Posterior cingulate gyrus (tissue), 11 donors: ENCODE measurements at regions of chr14 and their contacts with region 1.

Region 1: DNA sequence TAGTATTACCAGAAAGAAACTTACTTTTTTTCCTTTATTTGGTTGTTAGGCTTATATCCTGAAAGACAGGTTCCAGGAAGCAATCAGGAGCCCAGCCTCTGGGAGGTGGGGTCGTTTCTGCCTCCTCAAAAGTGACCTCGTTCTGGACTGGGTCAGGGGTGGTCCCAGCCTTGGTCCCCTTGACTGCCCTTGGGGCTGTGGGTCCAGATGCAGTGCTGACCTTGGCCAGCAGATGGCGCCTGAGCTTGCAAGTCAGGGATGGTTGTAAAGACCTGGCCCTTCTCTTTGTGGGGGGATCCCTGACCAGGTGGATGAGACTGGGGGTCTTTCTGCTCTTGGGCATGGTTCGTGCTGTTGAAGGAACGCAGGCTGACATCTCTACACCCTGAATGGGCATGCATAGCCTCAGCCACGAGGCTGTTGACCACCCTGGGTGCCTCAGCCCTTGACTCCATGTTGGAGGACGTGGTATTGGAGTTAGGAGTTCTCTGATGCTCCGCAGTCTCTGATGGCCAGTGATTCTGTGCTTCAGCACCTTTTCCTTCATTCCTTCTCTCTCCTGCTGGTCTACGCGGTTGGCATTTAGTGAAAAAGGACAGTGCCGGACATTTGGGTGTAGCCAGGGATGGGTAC is 62.4 kb downstream of the ADCK1 start:
- DNase-seq: peak; percentile 71 to 97 (median 90)

Region 2: DNA sequence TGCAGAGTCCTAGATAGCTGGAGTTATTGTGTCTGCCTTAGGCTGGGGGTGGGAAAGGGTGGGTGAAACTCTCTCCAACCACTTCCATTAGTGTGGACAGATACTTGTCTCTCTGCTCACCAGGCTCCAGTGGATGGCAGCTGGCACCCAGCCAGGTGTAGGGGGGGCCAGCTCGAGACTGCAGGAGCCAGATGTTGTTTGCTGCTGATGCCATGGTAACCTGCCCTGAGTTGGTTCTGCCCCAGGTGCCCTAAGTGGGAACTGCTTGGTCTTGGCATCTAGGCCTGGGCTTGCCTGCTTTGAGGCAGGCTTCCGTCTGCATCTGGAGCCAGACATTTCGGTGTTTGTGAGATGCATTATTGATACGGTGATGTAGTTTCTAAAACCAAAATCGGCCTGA is 19.8 kb after region 1 on chr14:
- intact Hi-C with region 1: no loop called
- DNase-seq: peak in 8 of 10 donors; percentile 29 to 93 (median 58)

Region 3: GRCh38 chr14:77912754-77913556 is 50.7 kb after region 1 on chr14:
- intact Hi-C with region 1: no loop called
- DNase-seq: peak in 2 of 10 donors; percentile 9 to 56

Region 4: DNA sequence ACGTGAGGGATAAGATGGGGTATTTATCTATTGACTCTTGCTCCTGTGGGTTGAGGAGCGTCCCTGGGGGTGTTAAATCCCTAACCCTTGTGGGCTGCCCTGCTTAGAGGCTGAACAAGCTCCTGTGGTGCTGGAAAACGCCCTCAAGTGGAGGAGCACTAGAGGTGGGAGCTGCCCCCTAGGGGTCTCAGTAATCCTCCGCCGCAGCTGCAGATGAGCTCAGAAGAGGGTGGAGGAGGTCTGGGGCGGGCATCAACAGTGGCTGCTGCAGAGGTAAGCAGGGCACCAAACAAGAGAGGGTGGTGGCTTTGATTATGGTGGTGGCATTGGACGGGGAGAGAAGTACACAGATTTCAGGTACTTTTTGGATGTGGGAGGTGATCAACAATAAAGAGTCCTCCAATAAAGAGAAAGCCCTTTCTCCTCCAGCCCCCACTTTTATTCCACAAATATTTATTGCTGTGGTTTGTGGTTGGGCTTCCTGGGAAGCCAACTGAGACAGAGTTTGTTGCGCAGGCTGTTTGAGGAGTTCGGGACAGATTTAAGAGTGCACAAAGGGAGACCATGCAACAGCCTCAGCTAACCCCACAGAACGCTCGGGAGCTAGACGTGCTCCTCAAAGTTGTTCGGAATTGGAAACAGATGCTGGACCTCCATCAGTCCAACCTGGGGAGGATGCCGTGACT is 117.5 kb after region 1 on chr14:
- intact Hi-C with region 1: loop called (anchors 5 kb)
- DNase-seq: peak in 6 of 10 donors; percentile 52 to 94 (median 52)

Region 5: DNA sequence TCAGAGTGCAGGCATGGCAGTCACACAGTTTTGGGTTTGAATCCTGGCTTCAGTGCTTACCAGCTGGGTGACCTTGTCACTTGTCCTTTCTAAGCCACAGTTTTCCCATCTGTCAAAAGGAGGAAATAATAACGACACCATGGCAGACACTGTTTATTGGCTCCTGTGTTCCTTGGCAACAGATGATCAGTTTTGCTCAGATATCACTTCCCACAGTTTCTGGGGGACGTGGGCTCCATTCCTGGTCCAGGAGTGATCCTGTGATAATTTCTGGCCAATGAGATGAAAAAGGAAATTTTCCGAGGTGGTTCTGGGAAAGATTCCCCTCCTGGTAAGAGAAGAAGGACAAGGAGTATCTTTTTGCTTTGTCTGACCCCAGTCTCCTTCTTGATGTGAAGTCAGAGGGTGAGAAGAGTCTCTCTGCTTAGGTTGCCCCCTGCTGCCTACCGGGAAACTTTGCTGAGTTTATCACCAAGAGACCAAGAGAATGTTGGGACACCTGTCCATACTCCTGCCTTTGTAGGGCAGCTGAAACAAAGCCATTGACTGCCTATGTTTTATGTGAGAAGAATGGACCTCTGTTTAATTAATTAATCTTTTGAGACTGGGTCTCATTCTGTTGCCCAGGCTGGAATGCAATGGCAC is 129.0 kb after region 1 on chr14:
- intact Hi-C with region 1: loop called (anchors 5 kb)
- DNase-seq: peak in 2 of 10 donors; percentile 50 to 58

Region 6: DNA sequence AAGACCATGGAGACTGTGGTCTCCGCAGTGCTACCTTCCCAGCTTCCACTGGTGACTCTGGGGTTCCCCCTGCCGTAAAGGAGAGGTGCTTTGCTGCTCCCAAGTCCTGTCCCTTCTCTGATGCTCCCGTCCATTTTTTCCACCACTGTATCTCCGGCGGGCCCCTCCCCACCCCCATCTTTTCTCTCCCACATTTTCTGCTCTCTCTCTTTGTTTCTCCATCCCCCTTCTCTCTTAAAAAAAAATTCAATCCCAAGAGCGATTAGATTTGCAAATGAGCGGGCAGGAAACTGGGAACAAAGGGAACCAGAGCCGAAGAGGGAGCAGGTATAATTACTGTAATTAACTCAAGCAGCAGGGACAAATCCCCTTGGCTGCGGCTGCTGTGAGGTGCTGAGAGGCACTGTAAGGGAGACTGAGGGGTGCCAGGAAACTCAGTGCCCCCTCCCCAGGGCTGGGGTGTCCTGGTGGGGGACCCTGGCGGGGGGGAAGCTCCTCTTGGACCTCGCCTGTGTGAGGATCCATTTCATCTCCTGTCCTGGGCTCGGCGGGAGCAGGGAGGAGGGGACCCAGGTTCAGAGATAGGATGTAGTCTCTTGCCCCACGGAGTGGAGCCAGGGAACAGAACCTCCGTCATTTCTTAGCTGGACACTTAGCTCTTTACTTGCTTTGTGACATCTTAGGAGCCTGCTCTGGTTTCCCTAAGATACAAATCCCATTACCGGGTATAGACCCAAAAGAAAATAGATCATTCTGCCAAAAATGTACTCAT is 167.5 kb after region 1 on chr14:
- intact Hi-C with region 1: loop called (anchors 2 kb)
- DNase-seq: peak in 5 of 10 donors; percentile 15 to 86 (median 33)

Region 7: DNA sequence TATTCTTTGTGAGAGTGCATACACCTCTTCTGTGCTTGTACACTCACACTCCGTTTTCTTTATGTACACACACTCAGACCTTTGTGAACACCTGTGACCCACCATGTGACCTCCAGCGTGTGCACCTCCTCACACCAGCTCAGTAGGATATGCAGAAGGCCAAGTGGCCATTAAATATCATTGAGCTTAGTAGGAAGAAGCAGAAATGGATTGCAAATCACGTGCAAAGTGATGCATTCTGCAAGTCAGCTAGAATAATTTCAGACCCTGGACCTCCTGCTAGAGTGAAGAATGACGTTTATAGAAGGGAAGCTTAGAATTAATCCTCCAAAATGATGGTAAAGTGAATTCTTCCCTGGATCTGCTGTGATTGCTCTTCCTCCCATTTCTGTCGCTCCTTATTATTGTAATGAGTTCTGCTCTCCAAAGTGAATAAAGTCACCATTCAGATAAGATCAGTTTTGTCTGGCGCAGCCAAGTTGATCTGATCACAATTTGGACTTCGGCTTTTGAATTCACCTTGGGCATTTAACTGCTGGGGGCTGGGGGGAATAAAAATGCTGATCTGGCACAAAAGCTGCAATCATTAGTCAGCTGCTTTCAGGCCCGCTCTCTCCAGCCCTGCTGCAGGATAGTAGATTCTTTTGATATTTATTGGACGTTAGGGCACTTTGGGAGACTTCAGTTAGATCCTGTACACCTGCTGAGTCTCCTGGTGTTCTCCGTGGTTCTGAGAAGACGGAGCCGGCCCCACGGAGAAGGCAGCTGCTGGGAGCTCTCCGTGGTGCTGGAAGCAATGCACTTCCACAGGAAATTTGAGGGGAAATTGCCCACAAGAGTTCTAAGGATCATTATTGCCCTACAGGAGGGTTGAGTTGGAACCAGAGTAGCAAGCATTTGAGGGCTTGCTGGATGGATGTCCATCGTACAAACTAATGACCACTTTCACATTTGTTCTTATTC is 295.5 kb after region 1 on chr14:
- intact Hi-C with region 1: loop called (anchors 10 kb)
- DNase-seq: peak in 1 of 10 donors; percentile 29

Region 8: DNA sequence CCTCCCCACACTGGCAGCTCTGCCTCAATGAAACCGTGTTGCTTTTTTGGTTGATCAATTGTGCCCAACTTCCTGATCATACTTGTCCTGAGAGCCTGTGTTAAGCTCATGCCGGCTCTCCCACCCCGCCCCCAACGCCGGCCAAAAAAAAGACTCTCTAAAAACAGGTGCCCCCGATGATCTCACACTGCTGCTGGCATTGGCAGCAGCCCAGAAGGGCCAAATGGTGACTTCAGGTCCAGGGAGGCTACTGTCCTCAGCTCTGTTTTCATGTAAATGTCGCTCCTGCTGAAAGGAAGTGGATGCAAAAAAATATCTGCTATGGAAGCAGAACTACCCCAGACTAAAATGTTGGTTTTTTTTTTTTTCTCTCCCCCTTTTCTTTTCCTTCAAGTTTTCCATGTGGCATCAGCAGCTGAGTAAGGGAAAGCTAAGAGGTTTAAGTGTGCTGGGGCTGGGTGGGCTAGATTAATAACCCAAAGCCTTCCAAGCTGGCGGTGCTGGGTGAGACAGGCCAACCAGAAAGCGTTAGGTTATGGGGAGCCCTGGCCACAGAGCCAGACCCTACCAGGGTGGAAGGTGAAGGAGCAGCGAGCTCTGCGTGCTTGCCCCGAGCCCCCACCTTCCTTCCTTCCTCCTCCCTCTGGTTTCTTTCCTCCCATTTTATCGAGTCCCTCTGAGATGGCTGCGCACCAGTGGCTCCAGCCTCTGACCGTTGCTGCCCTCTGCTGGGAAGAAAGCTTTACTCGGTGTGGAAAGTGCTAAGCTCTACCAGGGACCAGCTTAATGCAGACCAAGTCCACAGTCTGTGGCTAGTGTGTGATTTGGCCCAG is 704.0 kb after region 1 on chr14:
- intact Hi-C with region 1: loop called (anchors 10 kb)
- DNase-seq: peak; percentile 67 to 97 (median 90)

Region 9: GRCh38 chr14:78598041-78598920 is 736.0 kb after region 1 on chr14:
- intact Hi-C with region 1: loop called (anchors 10 kb)
- DNase-seq: peak; percentile 32 to 95 (median 62)